SK-N-SH (cell line): ENCODE measurements at regions of chr21 and their contacts with region 1.

Region 1: DNA sequence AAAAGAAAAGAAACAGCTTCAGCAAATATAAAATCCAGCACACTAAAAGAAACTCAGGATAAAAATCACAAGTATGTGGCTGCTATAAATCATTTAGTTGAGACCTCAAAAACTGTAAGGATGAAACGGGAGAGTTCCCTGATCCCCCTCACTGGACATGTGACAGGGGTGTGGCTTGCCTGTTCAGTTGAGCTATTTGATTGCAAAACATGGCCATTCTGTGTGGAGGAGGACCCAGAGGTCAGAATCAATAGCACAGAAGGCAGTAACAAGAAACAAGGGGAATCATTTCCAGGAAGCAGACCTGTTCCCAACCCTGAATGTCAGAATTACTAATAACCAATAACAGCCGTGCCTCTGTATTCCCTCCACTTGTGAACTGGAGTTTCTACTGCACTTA is 27.9 kb downstream of the RBM11 start:
- DNase-seq: no peak
- H3K4me3 ChIP-seq: no peak overlapping the region
- H3K27ac ChIP-seq: no peak overlapping the region
- H3K4me1 ChIP-seq: peaks cover 0 to 5% of the 10 kb centered on the region in 2 experiments; a peak in 1 of 4 replicates
- H3K27me3 ChIP-seq: no peaks in the 10 kb centered on the region
- CTCF ChIP-seq: no peak
- EP300 ChIP-seq: no peak
- RAD21 ChIP-seq: no peak

Region 2: GRCh38 chr21:14229399-14229798 is 14.5 kb before region 1 on chr21:
- CTCF ChIA-PET with region 1: no interaction called
- POLR2A ChIA-PET with region 1: no interaction called
- DNase-seq: no peak
- H3K4me3 ChIP-seq: no peak overlapping the region
- H3K27ac ChIP-seq: no peak overlapping the region
- H3K4me1 ChIP-seq: no peaks in the 10 kb centered on the region
- H3K27me3 ChIP-seq: no peaks in the 10 kb centered on the region
- CTCF ChIP-seq: no peak
- EP300 ChIP-seq: no peak
- RAD21 ChIP-seq: no peak

Region 3: DNA sequence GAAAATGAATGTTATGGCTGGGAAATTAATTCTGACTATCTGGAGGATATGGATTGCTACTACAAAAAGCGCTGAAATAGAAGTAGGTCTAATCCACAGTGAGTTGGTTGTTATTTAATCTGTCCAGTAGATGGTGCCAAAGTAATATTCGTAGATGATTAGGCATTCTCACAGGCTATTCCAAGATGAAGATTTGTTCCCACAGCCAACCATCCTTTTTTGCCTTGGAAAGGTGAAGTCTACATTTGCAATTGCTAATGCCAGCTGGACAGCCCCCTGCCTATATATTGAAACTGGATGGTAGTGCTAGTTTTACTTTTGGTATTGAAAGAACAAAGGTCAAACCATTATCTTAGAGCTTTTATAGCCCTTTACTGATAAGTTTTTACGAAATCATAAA is 15.9 kb after region 1 on chr21:
- CTCF ChIA-PET with region 1: interaction called, 13 read pairs
- POLR2A ChIA-PET with region 1: no interaction called
- DNase-seq: peak; percentile 44
- H3K4me3 ChIP-seq: no peak overlapping the region
- H3K27ac ChIP-seq: no peak overlapping the region
- H3K4me1 ChIP-seq: no peaks in the 10 kb centered on the region
- H3K27me3 ChIP-seq: peaks cover 15% of the 10 kb centered on the region; the same call in 1 of the 2 replicates
- CTCF ChIP-seq: peak; percentile 69
- EP300 ChIP-seq: no peak
- RAD21 ChIP-seq: peak; percentile 77

Region 4: DNA sequence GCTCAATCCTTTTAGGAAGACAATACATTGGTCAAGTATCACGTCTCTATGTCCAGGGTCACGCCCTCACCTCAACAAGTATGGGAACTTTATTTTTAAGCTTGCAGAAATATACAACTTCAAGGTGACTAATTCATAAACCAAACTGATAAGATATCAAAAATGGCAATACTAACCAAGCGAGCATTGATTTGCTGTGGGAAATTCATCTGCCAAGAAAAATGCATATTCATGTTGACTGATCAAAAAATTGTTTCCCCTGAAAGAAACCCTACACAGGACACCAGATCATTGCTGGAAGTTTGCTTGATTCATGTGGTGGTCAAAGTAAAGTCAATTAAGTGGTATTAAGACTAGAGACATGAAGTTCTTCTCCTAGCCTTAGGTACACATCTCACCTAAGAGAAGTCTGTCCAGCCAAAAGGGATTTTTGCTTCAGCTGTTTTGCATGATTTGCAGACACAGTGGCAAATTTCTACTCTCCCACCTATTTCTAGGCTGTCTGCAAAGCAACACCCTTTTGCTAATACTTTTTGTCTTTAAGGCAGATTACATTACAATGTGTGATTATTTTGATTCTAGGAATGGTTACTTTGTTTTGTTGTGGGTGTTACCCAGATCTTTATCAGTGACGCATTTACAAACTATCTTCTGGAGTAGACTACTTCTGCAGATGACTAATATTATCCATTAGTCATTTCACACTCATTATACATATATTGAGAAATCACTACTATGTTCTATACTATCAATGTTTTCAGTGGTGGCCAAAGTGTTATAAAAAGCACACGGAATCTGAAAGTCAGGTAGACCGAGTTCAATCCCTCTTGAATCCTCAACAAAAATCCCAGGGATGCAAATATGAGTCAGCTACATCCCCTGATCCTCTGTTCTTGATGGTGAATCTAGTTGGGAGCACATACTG is 289.9 kb after region 1 on chr21:
- CTCF ChIA-PET with region 1: no interaction called
- POLR2A ChIA-PET with region 1: no interaction called
- DNase-seq: no peak
- H3K4me3 ChIP-seq: no peak overlapping the region
- H3K27ac ChIP-seq: no peak overlapping the region
- H3K4me1 ChIP-seq: peaks cover 0 to 6% of the 10 kb centered on the region in 2 experiments; a peak in 1 of 4 replicates
- H3K27me3 ChIP-seq: no peaks in the 10 kb centered on the region; the same call in 1 of the 2 replicates
- CTCF ChIP-seq: no peak
- EP300 ChIP-seq: no peak
- RAD21 ChIP-seq: no peak